Activated T-helper 2 cell treated with anti-CD3 and anti-CD28 coated beads, Interferon-gamma antibody, Interleukin-2, Interleukin-4, amounts not matched to agents 10 μg/mL and 5 μg/mL and 100 μg/mL, durations not matched to agents 14 hours and 24 hours and 36 hours (primary cell): ENCODE measurements at regions of chr19 and their contacts with region 1.

Region 1: DNA sequence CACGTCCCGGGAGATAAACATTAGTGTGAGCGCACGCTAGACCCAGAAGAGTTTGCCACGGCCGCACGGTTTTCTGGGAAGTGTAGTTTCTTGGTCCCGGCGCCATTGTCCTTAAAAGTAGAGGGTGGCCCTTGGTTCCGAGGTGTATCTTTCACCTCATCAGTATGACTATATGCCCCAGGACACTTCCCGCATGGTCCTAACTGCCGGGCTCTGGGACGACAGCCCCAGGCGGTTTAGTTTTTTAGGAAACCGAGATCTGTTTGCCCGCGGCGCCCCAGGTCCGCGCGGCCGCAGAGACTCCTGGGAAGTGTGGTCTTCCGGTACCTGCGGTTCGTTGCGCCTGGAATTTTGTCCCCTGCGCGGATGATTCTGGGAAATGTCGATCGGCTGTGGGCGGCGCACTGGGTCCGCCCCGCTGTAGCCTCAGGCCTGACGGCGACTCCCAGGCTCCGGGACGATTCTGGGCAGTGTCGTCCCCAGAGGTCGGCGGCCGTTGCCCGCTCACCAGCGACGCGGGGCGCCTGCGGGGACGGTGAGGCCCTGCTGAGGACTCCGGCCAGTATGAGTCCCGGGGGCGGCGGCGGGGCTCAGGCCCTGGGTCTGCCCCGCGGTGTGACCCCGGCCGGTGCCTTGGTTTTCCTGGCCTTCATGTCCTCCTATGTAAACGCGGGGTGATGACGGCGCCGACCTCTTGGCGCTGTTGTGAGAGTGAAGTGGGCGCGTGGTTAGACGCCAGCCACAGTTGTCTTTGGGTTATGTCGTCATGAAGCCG is at the start of gene ZNF181:
- DNase-seq: peak; percentile 77
- H3K4me3 Mint-ChIP-seq: peak within 1 kb of the TSS; percentile 91
- H3K27ac Mint-ChIP-seq: peak within 1 kb of the TSS; percentile 95
- H3K4me1 Mint-ChIP-seq: peaks cover 17% of the 10 kb centered on the region
- H3K27me3 Mint-ChIP-seq: no peaks in the 10 kb centered on the region
- total RNA-seq, gene ZNF181: 2.6 and 3.4 TPM in 2 replicates

Region 2: GRCh38 chr19:34677386-34678084 is 56.5 kb before region 1 on chr19 and contains the start of gene ZNF302:
- intact Hi-C with region 1: loop called (anchors 1 kb)
- DNase-seq: peak; percentile 94
- H3K4me3 Mint-ChIP-seq: peak within 1 kb of the TSS; percentile 93
- H3K27ac Mint-ChIP-seq: peak within 1 kb of the TSS; percentile 99
- H3K4me1 Mint-ChIP-seq: peaks cover 23% of the 10 kb centered on the region
- H3K27me3 Mint-ChIP-seq: peaks cover 6% of the 10 kb centered on the region
- total RNA-seq, gene ZNF302: 14.1 and 14.7 TPM in 2 replicates

Region 3: GRCh38 chr19:34712395-34713261 is 21.4 kb before region 1 on chr19:
- intact Hi-C with region 1: no loop called
- DNase-seq: peak; percentile 33
- H3K4me3 Mint-ChIP-seq: no peak overlapping the region
- H3K27ac Mint-ChIP-seq: no peak overlapping the region
- H3K4me1 Mint-ChIP-seq: peaks cover 1% of the 10 kb centered on the region
- H3K27me3 Mint-ChIP-seq: peaks cover 3% of the 10 kb centered on the region

Region 4: GRCh38 chr19:34772697-34773554 is 38.9 kb after region 1 on chr19 and contains the start of gene ZNF599:
- intact Hi-C with region 1: loop called (anchors 1 kb)
- DNase-seq: peak; percentile 86
- H3K4me3 Mint-ChIP-seq: peak within 1 kb of the TSS; percentile 88
- H3K27ac Mint-ChIP-seq: peak within 1 kb of the TSS; percentile 83
- H3K4me1 Mint-ChIP-seq: peaks cover 14% of the 10 kb centered on the region
- H3K27me3 Mint-ChIP-seq: no peaks in the 10 kb centered on the region
- total RNA-seq, gene ZNF599: 1.9 and 2.0 TPM in 2 replicates